Esophagus muscularis mucosa (tissue), 4 donors: ENCODE measurements at regions of chr10 and their contacts with region 1.

Region 1: DNA sequence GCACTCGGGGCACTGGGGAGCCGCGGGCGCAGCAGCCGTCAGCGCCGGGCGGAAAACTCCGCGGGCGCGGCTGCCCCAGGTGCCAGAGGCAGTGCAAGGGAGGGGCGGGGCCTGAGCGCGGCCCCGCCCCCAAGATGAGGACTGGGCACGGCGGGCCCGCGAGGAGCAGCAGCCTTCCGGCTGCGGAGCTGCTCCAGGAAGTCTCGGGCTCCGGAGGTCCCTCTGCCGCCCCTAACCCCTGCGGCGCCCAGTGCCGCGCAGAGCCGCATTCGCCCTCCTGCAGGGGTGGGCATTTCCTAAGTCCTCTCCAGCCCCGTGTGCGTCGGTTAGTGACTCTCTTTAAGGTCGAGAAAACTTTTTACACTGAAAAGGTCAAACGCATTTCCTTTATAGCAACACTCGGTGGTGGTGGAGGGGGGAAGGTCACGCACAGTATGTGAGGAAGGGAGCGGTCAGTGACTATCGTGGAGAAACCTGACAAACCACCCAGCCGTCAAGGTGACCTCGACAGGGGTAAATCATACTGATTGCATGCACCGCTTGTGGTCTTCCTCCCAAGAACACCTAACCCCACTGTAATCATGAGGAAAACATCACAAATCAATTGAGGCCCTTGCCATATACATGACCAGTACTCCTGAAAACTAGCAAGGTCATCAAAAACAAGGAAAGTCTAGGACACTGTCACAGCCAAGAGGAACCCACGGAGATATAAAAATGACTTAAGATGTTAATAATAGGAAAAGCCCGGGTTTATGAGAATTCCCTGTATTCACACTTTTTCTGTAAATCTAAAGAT is at the start of gene ANXA11:
- DNase-seq: no peak
- H3K4me3 ChIP-seq: peak within 1 kb of the TSS; percentile 80 to 98 (median 92)
- H3K27ac ChIP-seq: peak within 1 kb of the TSS; percentile 96 to 100 (median 98)
- H3K4me1 ChIP-seq: peaks cover 54 to 84% (median 77%) of the 10 kb centered on the region in 4 donors
- H3K27me3 ChIP-seq: no peaks in the 10 kb centered on the region
- CTCF ChIP-seq: no peak
- EP300 ChIP-seq: no peak
- POLR2A ChIP-seq: peak; percentile 83
- total RNA-seq, gene ANXA11: 126 to 213 (median 166) TPM

Region 2: DNA sequence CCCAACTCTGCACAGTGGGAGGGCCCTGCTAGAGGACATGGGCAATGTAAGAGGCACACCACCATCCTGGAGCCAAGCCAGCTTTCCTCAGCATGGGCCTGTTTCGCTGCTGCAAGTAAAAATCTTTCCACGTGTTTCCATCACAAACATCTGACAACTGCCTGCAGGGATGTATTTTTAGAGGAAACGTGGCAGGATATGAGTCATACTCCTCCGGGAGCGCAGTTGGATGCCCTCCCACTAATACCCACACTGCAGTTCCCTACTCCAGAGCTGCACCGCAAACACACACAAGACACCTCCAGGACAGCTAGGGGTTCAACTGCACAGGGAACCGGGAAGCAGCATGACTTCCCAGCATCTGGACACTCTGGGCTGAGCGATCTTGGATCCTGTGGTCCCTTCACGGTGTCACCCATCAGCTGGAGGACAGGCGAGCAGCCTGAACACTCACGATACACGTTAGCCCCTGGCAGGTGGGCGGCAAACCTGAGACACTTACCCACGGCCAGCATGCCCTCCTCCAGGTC is 47.0 kb before region 1 on chr10:
- intact Hi-C with region 1: loop called (anchors 5 kb)
- DNase-seq: peak; percentile 96
- H3K4me3 ChIP-seq: no peak overlapping the region
- H3K27ac ChIP-seq: peak overlapping the region; percentile 75 to 87 (median 80)
- H3K4me1 ChIP-seq: peaks cover 61 to 93% (median 77%) of the 10 kb centered on the region in 4 donors
- H3K27me3 ChIP-seq: no peaks in the 10 kb centered on the region
- CTCF ChIP-seq: peak in 1 of 3 experiments; percentile 6
- EP300 ChIP-seq: peak; percentile 43
- POLR2A ChIP-seq: no peak